Heart right ventricle (tissue), 16 donors: ENCODE measurements at regions of chr7 and their contacts with region 1.

Region 1: GRCh38 chr7:129443612-129444011 is 9.4 kb downstream of the STRIP2 start:
- DNase-seq: peak; percentile 22 to 47
- ATAC-seq: peak; percentile 71 to 99 (median 94)
- H3K4me3 ChIP-seq: no peak overlapping the region
- H3K27ac ChIP-seq: peak overlapping the region in 9 of 10 donors; percentile 17 to 80 (median 67)
- H3K4me1 ChIP-seq: peaks cover 0 to 23% (median 11%) of the 10 kb centered on the region in 9 donors
- H3K27me3 ChIP-seq: no peaks in the 10 kb centered on the region
- CTCF ChIP-seq: no peak

Region 2: DNA sequence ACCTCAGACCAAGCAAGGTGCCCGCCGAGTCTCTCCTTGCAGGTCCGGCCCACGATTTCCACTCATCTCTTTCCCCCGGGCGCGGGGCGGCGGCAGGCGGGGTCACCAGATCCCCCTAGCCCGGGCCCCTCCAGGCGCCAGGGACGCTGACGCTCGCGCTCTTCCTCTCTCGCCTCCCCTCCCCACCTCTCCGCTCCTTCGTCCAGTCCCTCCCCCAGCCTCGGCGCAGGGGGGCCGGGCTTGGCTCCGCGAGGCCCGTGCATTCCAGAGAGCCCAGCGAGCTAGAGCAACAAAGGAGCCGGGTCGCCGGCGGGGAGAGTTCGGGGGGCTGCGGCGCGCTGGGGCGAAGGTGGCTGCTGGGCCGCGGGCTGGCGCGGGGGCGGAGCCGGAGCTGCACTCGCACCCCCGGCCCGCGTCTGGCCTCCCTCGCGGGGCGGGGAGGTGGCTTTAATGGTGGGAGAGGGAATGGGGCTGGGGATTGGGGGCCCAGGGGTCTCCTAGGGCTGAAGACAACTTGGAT is 255.2 kb before region 1 on chr7 and contains the start of gene SMO:
- intact Hi-C with region 1: no loop called
- DNase-seq: peak; percentile 41 to 58
- ATAC-seq: peak; percentile 76 to 90 (median 84)
- H3K4me3 ChIP-seq: peak within 1 kb of the TSS; percentile 50 to 91 (median 79)
- H3K27ac ChIP-seq: peak within 1 kb of the TSS in 6 of 10 donors; percentile 35 to 67 (median 58)
- H3K4me1 ChIP-seq: peaks cover 0 to 20% (median 12%) of the 10 kb centered on the region in 9 donors
- H3K27me3 ChIP-seq: peaks cover 0 to 43% (median 4%) of the 10 kb centered on the region in 7 donors
- CTCF ChIP-seq: no peak
- total RNA-seq, gene SMO: 3.1 to 7.1 (median 4.9) TPM

Region 3: GRCh38 chr7:129389829-129390228 is 53.8 kb before region 1 on chr7:
- intact Hi-C with region 1: loop called in 1 of 10 experiments (anchors 2 kb)
- DNase-seq: no peak
- ATAC-seq: no peak
- H3K4me3 ChIP-seq: no peak overlapping the region
- H3K27ac ChIP-seq: no peak overlapping the region
- H3K4me1 ChIP-seq: peaks cover 0 to 27% (median 4%) of the 10 kb centered on the region in 9 donors
- H3K27me3 ChIP-seq: no peaks in the 10 kb centered on the region
- CTCF ChIP-seq: no peak